Psoas muscle (tissue), 8 donors: ENCODE measurements at regions of chr2 and their contacts with region 1.

Region 1: DNA sequence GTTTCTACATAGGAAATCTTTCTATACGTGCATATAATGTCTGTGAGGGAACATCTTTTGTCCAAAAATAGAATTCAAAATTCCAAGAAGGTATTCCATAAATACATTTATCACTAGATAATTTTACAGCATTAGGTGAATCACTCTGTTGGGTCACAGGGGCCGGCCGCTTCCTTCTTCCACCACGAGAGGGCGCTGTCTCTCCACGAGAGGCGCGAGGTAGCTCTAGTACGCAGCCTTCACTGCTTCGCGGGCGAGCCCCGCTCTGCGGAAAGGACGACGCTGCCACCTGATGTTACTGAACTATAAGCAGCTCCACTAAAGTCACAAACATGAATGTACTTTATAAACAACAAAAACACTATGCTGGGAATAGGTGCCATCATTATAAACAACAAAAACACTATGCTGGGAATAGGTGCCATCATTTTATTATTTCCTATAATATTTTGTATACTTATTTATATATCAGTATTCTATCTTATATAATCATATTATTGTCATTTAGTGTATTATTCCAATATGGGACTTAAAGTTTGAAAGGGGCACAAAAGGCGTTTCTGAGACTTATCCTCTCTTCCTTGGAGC is 69.4 kb upstream of the REV1 start:
- DNase-seq: peak; percentile 84 to 92
- ATAC-seq: peak; percentile 93 to 99 (median 96)
- H3K4me3 ChIP-seq: no peak overlapping the region
- H3K27ac ChIP-seq: no peak overlapping the region
- H3K4me1 ChIP-seq: no peaks in the 10 kb centered on the region
- H3K27me3 ChIP-seq: no peaks in the 10 kb centered on the region
- CTCF ChIP-seq: peak; percentile 100

Region 2: DNA sequence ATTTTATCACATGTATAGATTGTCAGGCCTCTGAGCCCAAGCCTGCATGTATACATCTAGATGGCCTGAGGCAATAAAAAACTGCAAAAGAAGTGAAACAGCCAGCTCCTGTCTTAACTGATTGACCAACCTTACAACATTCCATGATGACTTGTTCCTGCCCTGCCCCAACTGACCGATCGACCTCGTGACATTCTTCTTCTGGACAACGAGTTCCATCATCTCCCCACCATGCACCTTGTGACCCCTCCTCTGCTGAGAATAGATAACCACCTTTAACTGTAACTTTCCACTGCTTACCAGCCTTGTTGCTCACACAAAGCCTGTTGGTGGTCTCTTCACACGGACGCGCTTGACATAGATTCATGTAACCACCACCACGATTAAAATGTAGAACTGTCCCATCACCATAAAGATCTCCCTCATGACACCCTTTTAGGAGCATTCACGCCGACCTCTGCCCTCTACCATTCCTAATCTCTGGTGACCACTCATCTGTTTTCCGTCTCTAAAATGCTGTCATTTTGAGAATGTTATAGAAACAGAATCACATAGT is 50.7 kb after region 1 on chr2:
- intact Hi-C with region 1: loop called in 1 of 2 experiments (anchors 1 kb)
- DNase-seq: no peak
- ATAC-seq: no peak
- H3K4me3 ChIP-seq: no peak overlapping the region
- H3K27ac ChIP-seq: no peak overlapping the region
- H3K4me1 ChIP-seq: no peaks in the 10 kb centered on the region
- H3K27me3 ChIP-seq: no peaks in the 10 kb centered on the region
- CTCF ChIP-seq: no peak

Region 3: DNA sequence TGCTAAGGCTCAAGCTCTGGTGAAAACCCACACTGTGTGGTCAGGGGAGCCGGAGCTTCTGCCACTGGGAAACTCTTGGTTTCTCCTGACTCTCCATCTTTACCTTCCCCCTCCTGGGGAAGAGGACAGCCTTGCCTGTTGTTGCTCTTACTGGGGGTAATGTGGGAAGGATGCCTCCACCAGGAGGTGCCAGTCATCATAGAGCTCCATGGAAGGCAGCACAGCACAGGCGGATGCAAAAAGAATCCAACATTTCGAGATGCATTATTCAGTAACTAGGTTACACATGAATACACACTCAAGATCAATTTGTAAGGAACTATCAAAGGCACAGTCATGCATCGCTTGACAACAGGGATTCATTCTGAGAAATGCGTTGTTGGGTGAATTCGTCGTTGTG is 260.6 kb after region 1 on chr2:
- intact Hi-C with region 1: loop called (anchors 2 to 5 kb)
- DNase-seq: no peak
- ATAC-seq: no peak
- H3K4me3 ChIP-seq: no peak overlapping the region
- H3K27ac ChIP-seq: no peak overlapping the region
- H3K4me1 ChIP-seq: no peaks in the 10 kb centered on the region
- H3K27me3 ChIP-seq: peaks cover 0 to 1% (median 0%) of the 10 kb centered on the region in 3 donors
- CTCF ChIP-seq: no peak

Region 4: GRCh38 chr2:100242891-100243619 is 683.9 kb after region 1 on chr2:
- intact Hi-C with region 1: loop called (anchors 1 to 2 kb)
- DNase-seq: peak; percentile 59 to 78
- ATAC-seq: peak; percentile 81 to 93 (median 82)
- H3K4me3 ChIP-seq: no peak overlapping the region
- H3K27ac ChIP-seq: no peak overlapping the region
- H3K4me1 ChIP-seq: peaks cover 3% of the 10 kb centered on the region
- H3K27me3 ChIP-seq: no peaks in the 10 kb centered on the region
- CTCF ChIP-seq: peak; percentile 79

Region 5: DNA sequence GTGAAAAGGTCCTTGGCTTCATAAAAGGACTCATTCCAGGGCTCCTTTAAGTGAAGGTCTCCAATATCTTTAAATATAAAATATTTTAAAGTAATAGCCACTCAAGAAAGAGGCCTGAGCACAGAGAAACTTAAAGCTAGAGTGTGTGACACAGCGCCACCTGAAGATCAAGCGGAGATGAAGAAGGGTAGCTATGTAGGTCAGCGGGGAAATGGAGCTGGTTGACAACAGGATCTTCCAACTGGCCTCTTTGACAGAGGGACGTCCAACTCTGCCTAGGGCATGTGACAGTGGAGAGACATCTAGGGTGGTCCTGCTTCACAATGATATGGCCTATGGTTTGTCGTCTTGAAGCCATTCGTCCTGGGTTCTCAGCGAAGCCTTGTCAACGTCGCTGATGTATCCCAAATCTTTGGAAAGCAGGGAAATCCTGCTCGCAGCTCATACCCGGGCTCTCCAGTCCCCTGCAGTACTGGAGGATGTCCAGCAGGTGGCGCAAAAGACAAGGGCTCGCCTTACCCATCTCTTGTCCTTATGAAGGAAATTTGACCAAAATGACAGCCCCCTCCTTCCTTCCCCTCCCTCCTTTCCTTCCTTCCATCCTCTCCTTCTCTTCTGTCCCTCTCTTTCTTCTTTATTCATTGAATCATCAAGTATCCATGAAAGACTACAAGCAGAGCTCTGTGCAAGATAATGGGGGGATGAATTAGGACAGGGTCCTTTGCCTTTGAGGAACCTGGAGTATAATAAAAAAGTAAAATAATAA is 703.6 kb after region 1 on chr2:
- intact Hi-C with region 1: loop called in 1 of 2 experiments (anchors 1 kb)
- DNase-seq: peak; percentile 69 to 77
- ATAC-seq: peak; percentile 74 to 90 (median 82)
- H3K4me3 ChIP-seq: no peak overlapping the region
- H3K27ac ChIP-seq: no peak overlapping the region
- H3K4me1 ChIP-seq: peaks cover under 1% of the 10 kb centered on the region
- H3K27me3 ChIP-seq: no peaks in the 10 kb centered on the region
- CTCF ChIP-seq: peak; percentile 99

Region 6: GRCh38 chr2:100381240-100381639 is 822.1 kb after region 1 on chr2:
- intact Hi-C with region 1: loop called in 1 of 2 experiments (anchors 10 kb)
- DNase-seq: peak; percentile 69 to 74
- ATAC-seq: peak; percentile 64 to 85 (median 76)
- H3K4me3 ChIP-seq: no peak overlapping the region
- H3K27ac ChIP-seq: no peak overlapping the region
- H3K4me1 ChIP-seq: no peaks in the 10 kb centered on the region
- H3K27me3 ChIP-seq: peaks cover 0 to 4% (median 0%) of the 10 kb centered on the region in 3 donors
- CTCF ChIP-seq: peak; percentile 89